Right ventricle myocardium inferior (tissue), 1 donor: ENCODE measurements at regions of chr10 and their contacts with region 1.

Region 1: DNA sequence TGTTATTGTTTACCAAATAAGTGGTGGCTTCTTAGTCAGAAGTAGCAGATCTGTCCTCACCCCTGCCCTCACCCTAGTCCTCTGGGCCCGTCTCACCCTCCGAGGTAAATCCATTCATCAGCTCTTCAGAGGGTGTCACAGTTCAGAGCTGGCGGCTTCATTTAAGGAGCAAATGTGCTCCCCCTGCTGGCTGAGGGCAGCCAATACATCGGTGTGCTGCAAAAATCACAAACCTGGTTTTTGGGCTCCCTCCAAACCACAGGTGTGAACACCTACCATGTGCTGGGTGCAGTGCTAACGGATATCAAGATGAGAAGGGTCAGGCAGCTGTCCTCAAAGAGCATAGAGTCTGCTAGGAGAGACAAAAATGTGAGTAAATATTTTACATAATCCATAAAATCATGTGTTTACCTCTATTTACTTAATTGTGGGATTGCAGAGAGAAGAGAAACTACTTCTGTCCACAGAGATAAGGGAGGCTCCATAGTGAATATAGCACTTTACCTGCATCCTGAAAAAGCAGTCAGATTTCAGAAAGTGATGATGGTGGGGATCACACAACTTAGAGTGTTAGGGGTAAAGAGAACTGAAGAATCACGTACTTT is 15.5 kb upstream of the CRTAC1 start:
- DNase-seq: peak; percentile 79
- ATAC-seq: peak; percentile 38

Region 2: DNA sequence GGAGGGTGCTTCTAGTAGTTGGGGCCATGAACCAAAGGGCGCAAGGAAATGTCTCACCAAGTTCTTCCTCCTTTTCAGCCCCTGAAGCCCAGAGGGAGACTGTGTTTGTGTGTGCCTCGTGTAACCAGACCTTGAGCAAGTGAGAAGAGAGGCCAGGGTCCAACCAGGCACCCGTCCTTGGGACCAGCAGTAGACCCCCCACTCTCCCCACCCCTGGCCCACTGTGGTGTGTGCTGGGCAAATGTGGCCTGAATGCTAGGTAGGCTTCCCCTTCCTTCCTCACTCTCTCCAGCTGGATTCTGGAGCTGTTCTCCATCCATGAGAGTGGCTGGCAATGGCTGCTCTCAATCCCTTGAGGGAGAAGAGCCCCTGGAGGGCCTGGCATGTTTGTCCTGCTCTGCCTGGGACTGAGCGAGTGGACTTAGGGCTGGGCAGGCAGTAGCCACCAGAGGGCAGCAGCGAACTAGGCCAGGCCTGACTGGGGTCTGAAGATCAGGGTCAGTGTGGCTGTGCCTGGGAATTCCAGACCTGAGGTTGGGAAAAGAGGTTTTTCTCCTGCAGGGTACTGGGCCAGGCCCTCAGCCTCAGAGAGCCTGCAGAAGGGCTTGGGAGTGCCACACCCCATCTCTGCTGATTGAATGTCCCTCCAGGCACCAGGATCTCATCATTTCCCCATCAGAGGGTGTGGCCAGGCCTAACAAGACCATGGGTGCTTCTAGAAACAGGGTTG is 286.6 kb before region 1 on chr10:
- intact Hi-C with region 1: loop called (anchors 10 kb)
- DNase-seq: peak; percentile 77
- ATAC-seq: peak; percentile 72

Region 3: DNA sequence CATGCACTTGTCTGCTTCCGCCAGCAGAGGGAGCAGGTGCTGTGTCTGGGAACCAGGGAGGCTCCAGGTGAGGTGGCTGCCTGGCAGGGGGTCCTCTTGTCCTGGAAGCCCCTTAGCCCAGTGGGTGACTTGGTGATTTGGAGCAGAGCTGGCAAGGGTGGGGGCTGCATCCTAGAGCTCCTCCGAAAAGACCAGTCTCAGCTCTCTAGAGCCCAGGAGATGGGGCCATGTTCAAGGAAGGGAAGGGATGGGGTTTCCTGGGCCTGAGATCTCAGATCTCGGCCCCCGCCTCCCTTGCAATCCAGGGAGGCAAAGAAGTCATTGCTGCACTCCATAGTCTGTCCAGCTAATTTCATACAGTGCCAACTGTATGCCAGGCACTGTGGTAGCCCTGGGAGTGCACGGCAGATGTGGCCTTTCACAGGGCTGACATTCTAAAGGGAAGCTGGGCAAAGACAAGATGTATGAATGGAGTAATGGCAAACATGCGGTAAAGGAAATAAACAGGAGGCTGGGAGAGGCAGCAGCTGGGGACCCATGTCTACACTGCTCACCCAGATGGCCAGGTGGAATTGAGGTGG is 253.7 kb before region 1 on chr10:
- intact Hi-C with region 1: loop called (anchors 10 kb)
- DNase-seq: no peak
- ATAC-seq: peak; percentile 40

Region 4: GRCh38 chr10:97914837-97915211 is 131.1 kb before region 1 on chr10:
- intact Hi-C with region 1: loop called (anchors 2 kb)
- DNase-seq: peak; percentile 83
- ATAC-seq: peak; percentile 74

Region 5: GRCh38 chr10:98006266-98006665 is 39.6 kb before region 1 on chr10:
- intact Hi-C with region 1: no loop called
- DNase-seq: no peak
- ATAC-seq: no peak